HCT116 (cell line): ENCODE measurements at regions of chr11 and their contacts with region 1.

Region 1: DNA sequence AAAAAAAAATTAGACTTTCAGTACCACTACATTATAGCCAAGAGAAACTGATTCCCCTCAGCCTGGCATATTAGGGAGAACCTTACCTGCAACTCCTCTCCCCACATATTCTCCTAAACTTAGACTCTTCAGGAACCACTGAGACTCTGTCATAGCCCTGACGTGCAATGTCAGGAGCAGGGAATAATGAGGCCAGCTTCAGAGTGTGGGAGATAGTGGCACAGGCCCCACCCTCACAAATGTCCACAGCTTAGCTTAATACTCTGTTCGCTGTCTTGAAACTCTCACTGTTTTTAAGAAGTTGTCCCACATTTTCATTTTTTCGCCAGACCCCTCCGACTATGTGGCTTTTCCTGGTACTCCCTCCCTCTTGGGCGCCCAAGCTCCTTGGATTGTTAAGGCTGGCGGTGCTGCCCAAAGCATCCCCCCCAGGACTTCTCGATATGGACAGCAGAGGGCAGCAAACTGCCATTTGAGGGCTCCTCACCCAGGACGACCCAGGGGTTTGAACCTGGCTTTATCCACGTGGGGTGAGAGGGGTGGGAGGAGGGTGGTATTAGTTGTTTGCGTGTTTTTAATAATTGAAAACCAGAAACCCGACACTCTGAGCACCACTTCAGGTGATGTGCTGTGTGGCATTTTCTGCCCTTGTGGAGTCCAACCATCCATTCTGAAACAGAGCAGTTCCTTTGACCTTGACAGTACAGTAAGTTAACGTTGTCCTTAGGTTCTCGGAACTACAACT is 45.2 kb upstream of the RASSF10 start:
- DNase-seq: peak; percentile 59
- ATAC-seq: peak; percentile 98
- H3K4me3 ChIP-seq: no peak overlapping the region
- H3K27ac ChIP-seq: no peak overlapping the region
- H3K4me1 ChIP-seq: peaks cover 0 to 20% of the 10 kb centered on the region in 2 experiments; a peak in 1 of 4 replicates
- H3K27me3 ChIP-seq: no peaks in the 10 kb centered on the region
- CTCF ChIP-seq: peak; percentile 86 to 97 (median 95)
- POLR2A ChIP-seq: no peak
- RAD21 ChIP-seq: peak; percentile 97

Region 2: GRCh38 chr11:12052676-12053605 is 911.0 kb before region 1 on chr11:
- CTCF ChIA-PET with region 1: no interaction called
- POLR2A ChIA-PET with region 1: no interaction called
- RAD21 ChIA-PET with region 1: interaction called in 1 of 2 experiments, 3 read pairs
- intact Hi-C with region 1: loop called (anchors 5 kb)
- DNase-seq: no peak
- ATAC-seq: peak; percentile 78
- H3K4me3 ChIP-seq: no peak overlapping the region
- H3K27ac ChIP-seq: no peak overlapping the region
- H3K4me1 ChIP-seq: no peaks in the 10 kb centered on the region
- H3K27me3 ChIP-seq: no peaks in the 10 kb centered on the region
- CTCF ChIP-seq: peak; percentile 33 to 47 (median 44); a peak in 4 of 6 replicates
- POLR2A ChIP-seq: no peak
- RAD21 ChIP-seq: peak; percentile 67

Region 3: GRCh38 chr11:12331239-12331874 is 632.6 kb before region 1 on chr11:
- CTCF ChIA-PET with region 1: interaction called, 22 read pairs
- POLR2A ChIA-PET with region 1: no interaction called
- RAD21 ChIA-PET with region 1: interaction called, 5 to 6 read pairs
- intact Hi-C with region 1: loop called (anchors 2 kb)
- DNase-seq: peak; percentile 72
- ATAC-seq: peak; percentile 91
- H3K4me3 ChIP-seq: no peak overlapping the region
- H3K27ac ChIP-seq: no peak overlapping the region
- H3K4me1 ChIP-seq: peaks cover 0 to 2% of the 10 kb centered on the region in 2 experiments; a peak in 1 of 4 replicates
- H3K27me3 ChIP-seq: no peaks in the 10 kb centered on the region
- CTCF ChIP-seq: peak; percentile 67 to 84 (median 80)
- POLR2A ChIP-seq: no peak
- RAD21 ChIP-seq: peak; percentile 94

Region 4: DNA sequence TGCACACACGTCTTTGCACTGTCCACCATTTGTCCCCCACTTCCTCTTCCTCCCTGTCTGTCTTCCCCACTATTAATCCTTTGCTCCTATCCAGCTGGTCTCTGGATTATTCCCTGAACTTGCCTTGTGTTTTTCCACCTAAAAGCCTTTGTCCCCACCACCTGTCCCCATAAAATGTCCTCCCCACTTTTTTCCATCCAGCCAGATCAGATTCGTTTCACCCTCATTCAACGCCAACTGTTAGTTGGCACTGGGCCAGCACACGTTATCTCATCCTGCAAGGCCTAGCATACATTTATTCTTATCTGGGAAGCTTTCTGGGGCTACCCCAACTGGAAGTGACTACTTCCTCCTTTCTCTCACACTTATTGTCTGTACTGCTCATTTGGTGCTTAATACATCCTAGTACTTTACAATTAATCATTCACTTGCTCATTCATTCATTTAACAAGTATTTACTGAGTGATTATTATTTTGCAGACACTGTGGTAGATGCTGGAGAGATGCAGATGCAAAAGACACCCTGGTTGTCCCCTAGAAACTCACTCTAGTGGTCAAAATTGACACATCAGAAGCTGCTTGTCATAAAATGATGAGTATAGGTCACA is 141.4 kb after region 1 on chr11:
- CTCF ChIA-PET with region 1: no interaction called
- POLR2A ChIA-PET with region 1: no interaction called
- RAD21 ChIA-PET with region 1: no interaction called
- intact Hi-C with region 1: no loop called
- DNase-seq: no peak
- ATAC-seq: no peak
- H3K4me3 ChIP-seq: no peak overlapping the region
- H3K27ac ChIP-seq: no peak overlapping the region
- H3K4me1 ChIP-seq: peaks cover 0 to 20% of the 10 kb centered on the region in 2 experiments; a peak in 2 of 4 replicates
- H3K27me3 ChIP-seq: no peaks in the 10 kb centered on the region
- CTCF ChIP-seq: no peak
- POLR2A ChIP-seq: no peak
- RAD21 ChIP-seq: no peak

Region 5: GRCh38 chr11:13152736-13153533 is 189.0 kb after region 1 on chr11:
- CTCF ChIA-PET with region 1: interaction called, 31 read pairs
- POLR2A ChIA-PET with region 1: no interaction called
- RAD21 ChIA-PET with region 1: interaction called, 5 to 7 read pairs
- intact Hi-C with region 1: loop called (anchors 1 kb)
- DNase-seq: no peak
- ATAC-seq: 0 out of 2 replicates have a peak, but pooled peaks have one; percentile 46
- H3K4me3 ChIP-seq: no peak overlapping the region
- H3K27ac ChIP-seq: no peak overlapping the region
- H3K4me1 ChIP-seq: peaks cover 0 to 11% of the 10 kb centered on the region in 2 experiments; a peak in 1 of 4 replicates
- H3K27me3 ChIP-seq: no peaks in the 10 kb centered on the region
- CTCF ChIP-seq: peak; percentile 51 to 84 (median 55); a peak in 5 of 6 replicates
- POLR2A ChIP-seq: no peak
- RAD21 ChIP-seq: peak; percentile 84

Region 6: GRCh38 chr11:13210424-13210823 is 246.5 kb after region 1 on chr11:
- CTCF ChIA-PET with region 1: interaction called, 21 read pairs
- POLR2A ChIA-PET with region 1: no interaction called
- RAD21 ChIA-PET with region 1: interaction called, 3 to 9 read pairs
- intact Hi-C with region 1: no loop called
- DNase-seq: peak; percentile 79
- ATAC-seq: peak; percentile 76
- H3K4me3 ChIP-seq: no peak overlapping the region
- H3K27ac ChIP-seq: no peak overlapping the region
- H3K4me1 ChIP-seq: peaks cover 15 to 59% of the 10 kb centered on the region in 2 experiments
- H3K27me3 ChIP-seq: no peaks in the 10 kb centered on the region
- CTCF ChIP-seq: peak; percentile 74 to 94 (median 79)
- POLR2A ChIP-seq: no peak
- RAD21 ChIP-seq: peak; percentile 98

Region 7: DNA sequence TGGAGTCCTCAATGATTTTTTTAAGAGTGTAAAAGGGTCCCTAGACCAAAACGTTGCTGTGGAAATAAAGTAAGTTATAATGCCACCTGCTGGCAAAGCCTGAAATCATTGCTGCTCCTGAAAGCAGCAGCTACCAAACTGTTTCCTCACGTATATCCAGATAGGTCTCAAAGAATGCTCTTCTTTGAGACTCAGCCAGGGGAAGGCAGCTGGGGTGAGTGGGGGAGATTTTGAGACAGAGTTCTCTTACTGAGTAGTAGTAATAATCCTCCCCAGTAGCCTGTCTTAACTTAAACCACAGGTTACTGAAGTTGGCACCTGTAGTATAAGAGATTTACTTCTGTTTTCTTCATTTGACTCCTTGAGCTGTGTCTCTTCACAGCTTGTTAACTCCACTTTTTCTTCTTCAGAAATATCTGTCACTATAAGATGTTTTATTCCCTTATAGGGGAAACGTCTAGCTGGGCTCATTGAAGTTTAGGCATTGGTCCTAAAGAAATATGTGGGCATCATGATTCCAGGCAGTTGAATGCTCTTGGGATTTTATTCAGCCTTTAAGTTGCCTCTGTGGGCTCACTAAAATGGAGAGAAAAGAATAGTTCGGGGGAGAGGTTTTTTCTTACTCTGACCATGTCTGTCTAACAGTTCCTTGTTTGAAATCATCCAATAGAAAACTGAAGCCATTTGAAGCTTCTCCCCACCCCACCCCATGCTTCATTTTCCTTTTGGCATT is 421.1 kb after region 1 on chr11:
- CTCF ChIA-PET with region 1: interaction called, 6 read pairs
- POLR2A ChIA-PET with region 1: no interaction called
- RAD21 ChIA-PET with region 1: no interaction called
- intact Hi-C with region 1: loop called (anchors 10 kb)
- DNase-seq: peak; percentile 23
- ATAC-seq: peak; percentile 78
- H3K4me3 ChIP-seq: no peak overlapping the region
- H3K27ac ChIP-seq: no peak overlapping the region
- H3K4me1 ChIP-seq: no peaks in the 10 kb centered on the region
- H3K27me3 ChIP-seq: no peaks in the 10 kb centered on the region
- CTCF ChIP-seq: peak; percentile 55 to 64 (median 63)
- POLR2A ChIP-seq: no peak
- RAD21 ChIP-seq: peak; percentile 58